Activated B cell treated with CpG ODN at 0.5 μM for 24 hours (primary cell): ENCODE measurements at regions of chr11 and their contacts with region 1.

Region 1: GRCh38 chr11:67613960-67614715 is 7.4 kb downstream of the NDUFV1 start:
- DNase-seq: peak; percentile 81
- ATAC-seq: peak; percentile 95
- H3K4me3 Mint-ChIP-seq: peak overlapping the region; percentile 84
- H3K27ac Mint-ChIP-seq: peak overlapping the region; percentile 99
- H3K4me1 Mint-ChIP-seq: peaks cover 41% of the 10 kb centered on the region
- H3K27me3 Mint-ChIP-seq: no peaks in the 10 kb centered on the region
- CTCF ChIP-seq: no peak

Region 2: GRCh38 chr11:67648140-67649123 is 34.3 kb after region 1 on chr11:
- CTCF ChIA-PET with region 1: interaction called, 3 read pairs
- POLR2A ChIA-PET with region 1: interaction called, 19 read pairs
- intact Hi-C with region 1: no loop called
- DNase-seq: peak; percentile 59
- ATAC-seq: peak; percentile 85
- H3K4me3 Mint-ChIP-seq: peak overlapping the region; percentile 53
- H3K27ac Mint-ChIP-seq: peak overlapping the region; percentile 50
- H3K4me1 Mint-ChIP-seq: peaks cover 67% of the 10 kb centered on the region
- H3K27me3 Mint-ChIP-seq: peaks cover 2% of the 10 kb centered on the region
- CTCF ChIP-seq: peak; percentile 82